Right ventricle myocardium superior (tissue), 1 donor: ENCODE measurements at regions of chr5 and their contacts with region 1.

Region 1: DNA sequence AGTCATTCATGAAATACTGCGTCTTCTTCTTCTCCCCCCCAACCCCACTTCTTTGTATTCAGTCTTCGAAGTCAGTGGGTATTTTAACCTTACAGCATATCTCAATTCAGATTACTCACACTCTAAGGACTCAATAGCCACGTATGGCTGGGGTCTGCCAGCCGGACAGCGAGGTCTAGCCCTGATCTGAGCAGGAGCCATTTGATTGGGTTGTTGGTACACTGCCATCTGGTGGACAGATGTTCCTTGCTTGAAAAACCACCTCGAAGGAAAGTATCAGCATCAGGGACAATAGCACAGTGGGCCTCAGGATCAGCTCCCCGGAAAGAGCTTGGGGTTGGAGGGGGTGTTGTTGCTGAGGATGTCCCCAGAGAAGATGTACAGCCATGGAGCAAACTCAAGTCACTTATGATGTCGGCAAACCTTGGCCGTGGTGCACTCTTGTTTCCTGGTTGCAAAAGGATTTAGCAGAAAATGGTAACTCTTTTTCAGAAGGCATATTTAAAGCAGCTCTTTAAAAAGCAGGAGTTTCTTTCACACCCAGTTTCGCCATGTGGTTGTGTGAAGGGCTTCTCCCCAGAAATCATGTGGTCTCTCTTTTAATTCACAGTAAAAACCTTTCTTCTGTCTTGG is 31.7 kb upstream of the KCNMB1 start:
- DNase-seq: peak; percentile 62
- ATAC-seq: peak; percentile 76

Region 2: GRCh38 chr5:170225326-170226128 is 195.4 kb before region 1 on chr5:
- intact Hi-C with region 1: loop called (anchors 5 kb)
- DNase-seq: peak; percentile 79
- ATAC-seq: peak; percentile 79

Region 3: GRCh38 chr5:170267431-170268152 is 153.3 kb before region 1 on chr5:
- intact Hi-C with region 1: loop called (anchors 5 kb)
- DNase-seq: peak; percentile 79
- ATAC-seq: peak; percentile 82